ENCODE measurements at regions of chr6 and their contacts with region 1.

Region 1: GRCh38 chr6:84220809-84221409 is 6.5 kb downstream of the CEP162 start:
- DNase-seq: no peak
- H3K4me3 ChIP-seq: no peak overlapping the region
- H3K27ac ChIP-seq: no peak overlapping the region
- H3K4me1 ChIP-seq: no peaks in the 10 kb centered on the region
- H3K27me3 ChIP-seq: no peaks in the 10 kb centered on the region
- CTCF ChIP-seq: peak; percentile 39 to 63 (median 52)
- POLR2A ChIP-seq: no peak

Region 2: DNA sequence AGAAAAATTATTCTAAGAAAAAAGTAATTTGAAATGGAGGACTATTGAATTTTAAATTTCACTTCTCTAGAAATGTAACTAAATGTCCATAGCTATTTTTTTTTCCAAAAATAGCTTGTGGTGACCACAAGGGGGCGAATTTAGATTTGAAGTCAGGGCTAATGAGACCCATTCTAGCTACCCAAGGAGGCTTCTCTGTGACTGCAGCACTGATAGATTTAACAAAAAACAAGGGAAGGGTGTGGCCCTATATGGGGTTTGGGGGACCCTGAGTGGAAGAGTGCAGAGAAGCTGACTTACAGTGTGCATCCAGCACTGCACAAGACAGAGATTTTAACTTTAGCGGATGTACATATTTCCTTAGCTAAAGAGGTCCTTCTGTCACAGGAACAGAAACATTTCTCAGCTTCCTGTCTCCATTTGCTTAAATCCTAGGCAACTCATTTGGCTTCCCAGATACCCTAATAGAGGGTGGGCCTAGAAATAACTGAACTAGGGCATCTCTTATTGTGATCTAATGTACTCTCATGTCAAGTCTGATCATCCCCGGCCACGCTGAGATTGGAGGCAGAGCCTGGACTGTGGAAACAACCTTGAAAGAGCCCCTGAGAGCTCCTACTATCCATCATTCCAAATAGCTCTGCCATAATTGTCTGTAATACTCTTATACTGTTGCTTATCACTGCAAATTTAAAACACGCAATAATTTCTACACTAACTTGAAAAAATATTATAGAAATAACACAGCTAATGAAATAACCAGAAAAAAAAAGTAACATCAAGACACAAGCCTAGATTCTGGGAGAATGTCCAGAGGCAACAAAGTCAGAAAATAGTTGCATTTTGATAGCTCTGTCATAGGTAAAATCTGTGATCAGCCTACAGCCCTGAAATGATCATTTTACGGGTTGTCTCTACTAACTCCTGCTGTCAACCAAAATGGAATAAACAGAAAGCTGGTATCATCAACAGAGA is 605.6 kb before region 1 on chr6:
- intact Hi-C with region 1: loop called (anchors 10 kb)
- DNase-seq: no peak
- H3K4me3 ChIP-seq: no peak overlapping the region
- H3K27ac ChIP-seq: no peak overlapping the region
- H3K4me1 ChIP-seq: no peaks in the 10 kb centered on the region
- H3K27me3 ChIP-seq: no peaks in the 10 kb centered on the region
- CTCF ChIP-seq: peak in 3 of 4 experiments; percentile 42 to 46 (median 45)
- POLR2A ChIP-seq: no peak

Region 3: GRCh38 chr6:83884523-83884922 is 336.4 kb before region 1 on chr6:
- intact Hi-C with region 1: loop called (anchors 5 kb)
- DNase-seq: no peak
- H3K4me3 ChIP-seq: no peak overlapping the region
- H3K27ac ChIP-seq: no peak overlapping the region
- H3K4me1 ChIP-seq: no peaks in the 10 kb centered on the region
- H3K27me3 ChIP-seq: no peaks in the 10 kb centered on the region
- CTCF ChIP-seq: peak in 3 of 4 experiments; percentile 55 to 85 (median 84)
- POLR2A ChIP-seq: no peak

Region 4: GRCh38 chr6:85004361-85004995 is 783.6 kb after region 1 on chr6:
- intact Hi-C with region 1: no loop called
- DNase-seq: no peak
- H3K4me3 ChIP-seq: no peak overlapping the region
- H3K27ac ChIP-seq: no peak overlapping the region
- H3K4me1 ChIP-seq: no peaks in the 10 kb centered on the region
- H3K27me3 ChIP-seq: no peaks in the 10 kb centered on the region
- CTCF ChIP-seq: no peak
- POLR2A ChIP-seq: no peak

Measured in prostate gland (tissue), 2 donors.